ENCODE measurements at regions of chr22 and their contacts with region 1.

Region 1: DNA sequence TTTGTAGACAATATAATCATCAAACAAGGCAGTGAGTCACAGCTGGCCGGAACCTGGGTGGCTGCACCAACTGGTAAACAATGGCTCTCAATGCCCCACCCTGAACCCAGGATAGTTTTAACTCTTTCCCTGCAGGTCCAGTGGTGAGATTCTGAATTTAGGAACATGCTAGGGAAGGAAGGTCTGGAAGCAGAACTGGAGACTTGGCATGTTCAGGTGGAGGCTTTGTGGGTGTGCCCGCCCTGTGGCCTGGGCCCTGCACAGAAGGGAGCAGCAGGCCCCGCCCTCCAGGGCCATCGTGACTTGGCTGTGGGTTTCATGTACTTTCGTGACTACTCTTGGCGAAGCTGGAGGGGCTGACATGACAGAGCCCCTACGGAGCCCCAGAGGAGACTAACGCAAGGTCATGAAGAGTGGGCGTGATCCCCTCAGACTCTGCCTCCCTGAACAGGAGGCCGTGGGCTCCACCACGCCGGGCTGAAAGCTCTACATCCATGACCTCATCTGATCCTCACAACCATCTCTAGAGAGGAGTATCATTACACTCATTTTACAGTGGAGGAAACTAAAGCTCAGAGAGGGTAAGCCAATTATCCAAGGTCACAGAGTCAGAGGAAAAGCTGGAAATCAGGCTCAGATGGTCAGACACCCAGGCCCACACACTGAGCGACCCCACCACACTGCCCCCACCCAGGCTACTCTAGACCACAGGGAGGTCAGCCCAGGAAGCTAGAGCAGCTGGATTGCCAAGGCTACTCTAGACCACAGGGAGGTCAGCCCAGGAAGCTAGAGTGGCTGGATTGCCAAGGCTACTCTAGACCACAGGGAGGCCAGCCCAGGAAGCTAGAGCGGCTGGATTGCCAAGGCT is 27.3 kb downstream of the MAFF start:
- DNase-seq: peak; percentile 61 to 94 (median 85)
- H3K4me3 ChIP-seq: no peak overlapping the region
- H3K27ac ChIP-seq: peak overlapping the region; percentile 81 to 95 (median 90)
- H3K4me1 ChIP-seq: peaks cover 36 to 43% of the 10 kb centered on the region in 2 donors
- H3K27me3 ChIP-seq: no peaks in the 10 kb centered on the region
- CTCF ChIP-seq: no peak
- POLR2A ChIP-seq: no peak

Region 2: GRCh38 chr22:38114484-38115398 is 114.4 kb before region 1 on chr22:
- intact Hi-C with region 1: loop called in 1 of 2 experiments (anchors 10 kb)
- DNase-seq: peak; percentile 79 to 95 (median 89)
- H3K4me3 ChIP-seq: no peak overlapping the region
- H3K27ac ChIP-seq: no peak overlapping the region
- H3K4me1 ChIP-seq: peaks cover 0 to 7% of the 10 kb centered on the region in 2 donors
- H3K27me3 ChIP-seq: no peaks in the 10 kb centered on the region
- CTCF ChIP-seq: peak; percentile 80 to 97 (median 90)
- POLR2A ChIP-seq: no peak

Region 3: GRCh38 chr22:38272373-38273134 is 43.4 kb after region 1 on chr22 and contains the start of gene TMEM184B:
- intact Hi-C with region 1: no loop called
- DNase-seq: peak; percentile 63 to 85 (median 75)
- H3K4me3 ChIP-seq: peak within 1 kb of the TSS; percentile 71 to 100 (median 86)
- H3K27ac ChIP-seq: peak within 1 kb of the TSS in 4 of 5 donors; percentile 73 to 96 (median 93)
- H3K4me1 ChIP-seq: peaks cover 23 to 41% of the 10 kb centered on the region in 2 donors
- H3K27me3 ChIP-seq: no peaks in the 10 kb centered on the region
- CTCF ChIP-seq: no peak
- POLR2A ChIP-seq: peak; percentile 89 to 90
- total RNA-seq, gene TMEM184B: 7.1 to 107 (median 48.2) TPM

Region 4: GRCh38 chr22:38327805-38328204 is 98.7 kb after region 1 on chr22:
- intact Hi-C with region 1: no loop called
- DNase-seq: no peak
- H3K4me3 ChIP-seq: no peak overlapping the region
- H3K27ac ChIP-seq: no peak overlapping the region
- H3K4me1 ChIP-seq: no peaks in the 10 kb centered on the region
- H3K27me3 ChIP-seq: no peaks in the 10 kb centered on the region
- CTCF ChIP-seq: no peak
- POLR2A ChIP-seq: no peak

Region 5: DNA sequence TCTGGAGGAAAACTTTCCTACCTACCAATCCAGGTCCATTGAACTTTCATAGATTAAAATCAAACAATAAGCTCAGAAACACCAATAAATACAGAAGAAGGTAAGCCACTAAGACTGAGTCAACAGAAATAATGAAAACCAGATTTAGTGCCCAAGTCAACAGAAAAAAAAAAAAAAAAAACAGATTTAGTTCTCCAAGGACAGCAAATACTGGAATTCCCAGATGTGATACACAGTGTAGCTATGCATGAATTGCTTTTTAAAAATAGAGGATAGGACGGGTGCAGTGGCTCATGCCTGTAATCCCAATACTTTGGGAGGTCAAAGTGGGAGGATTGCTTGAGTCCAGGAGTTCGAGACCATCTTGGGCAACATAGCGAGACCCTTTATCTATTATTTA is 325.2 kb after region 1 on chr22:
- intact Hi-C with region 1: no loop called
- DNase-seq: no peak
- H3K4me3 ChIP-seq: no peak overlapping the region
- H3K27ac ChIP-seq: no peak overlapping the region
- H3K4me1 ChIP-seq: no peaks in the 10 kb centered on the region
- H3K27me3 ChIP-seq: no peaks in the 10 kb centered on the region
- CTCF ChIP-seq: no peak
- POLR2A ChIP-seq: no peak

Region 6: DNA sequence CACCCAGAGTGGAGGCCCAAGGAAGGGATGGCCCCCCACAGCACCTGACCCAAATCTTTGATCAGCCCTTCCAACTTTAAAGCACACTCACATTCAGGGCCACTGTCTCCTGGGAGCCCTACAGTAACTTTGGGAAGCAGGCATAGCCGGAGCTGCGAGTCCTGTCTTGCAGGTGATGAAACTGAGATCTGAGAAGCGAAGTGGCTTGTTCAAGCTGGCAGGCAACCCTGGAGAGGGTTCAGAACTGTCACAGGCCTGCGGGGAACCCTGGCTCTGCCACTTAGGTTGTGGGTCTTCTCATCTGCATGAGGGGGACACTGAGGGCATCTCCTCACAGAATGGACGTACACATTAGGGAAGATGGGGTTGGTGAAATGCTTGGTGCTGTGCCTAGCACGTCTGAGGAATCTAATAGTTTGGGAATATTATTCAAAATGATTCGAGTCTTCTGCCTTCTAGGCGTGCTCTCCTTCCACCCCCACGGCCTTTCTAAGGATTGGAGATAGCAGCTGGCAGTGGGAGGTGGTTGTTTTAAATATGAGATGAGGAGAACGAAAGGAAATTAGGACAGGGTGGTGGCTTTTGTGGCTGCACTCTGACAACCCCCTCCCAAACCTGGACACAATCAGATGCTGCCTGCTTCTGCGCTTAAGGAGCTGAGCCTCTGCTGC is 545.5 kb after region 1 on chr22:
- intact Hi-C with region 1: no loop called
- DNase-seq: no peak
- H3K4me3 ChIP-seq: no peak overlapping the region
- H3K27ac ChIP-seq: no peak overlapping the region
- H3K4me1 ChIP-seq: no peaks in the 10 kb centered on the region
- H3K27me3 ChIP-seq: no peaks in the 10 kb centered on the region
- CTCF ChIP-seq: no peak
- POLR2A ChIP-seq: no peak

Measured in adrenal gland (tissue), 19 donors.